ENCODE measurements at regions of chr17 and their contacts with region 1.

Region 1: DNA sequence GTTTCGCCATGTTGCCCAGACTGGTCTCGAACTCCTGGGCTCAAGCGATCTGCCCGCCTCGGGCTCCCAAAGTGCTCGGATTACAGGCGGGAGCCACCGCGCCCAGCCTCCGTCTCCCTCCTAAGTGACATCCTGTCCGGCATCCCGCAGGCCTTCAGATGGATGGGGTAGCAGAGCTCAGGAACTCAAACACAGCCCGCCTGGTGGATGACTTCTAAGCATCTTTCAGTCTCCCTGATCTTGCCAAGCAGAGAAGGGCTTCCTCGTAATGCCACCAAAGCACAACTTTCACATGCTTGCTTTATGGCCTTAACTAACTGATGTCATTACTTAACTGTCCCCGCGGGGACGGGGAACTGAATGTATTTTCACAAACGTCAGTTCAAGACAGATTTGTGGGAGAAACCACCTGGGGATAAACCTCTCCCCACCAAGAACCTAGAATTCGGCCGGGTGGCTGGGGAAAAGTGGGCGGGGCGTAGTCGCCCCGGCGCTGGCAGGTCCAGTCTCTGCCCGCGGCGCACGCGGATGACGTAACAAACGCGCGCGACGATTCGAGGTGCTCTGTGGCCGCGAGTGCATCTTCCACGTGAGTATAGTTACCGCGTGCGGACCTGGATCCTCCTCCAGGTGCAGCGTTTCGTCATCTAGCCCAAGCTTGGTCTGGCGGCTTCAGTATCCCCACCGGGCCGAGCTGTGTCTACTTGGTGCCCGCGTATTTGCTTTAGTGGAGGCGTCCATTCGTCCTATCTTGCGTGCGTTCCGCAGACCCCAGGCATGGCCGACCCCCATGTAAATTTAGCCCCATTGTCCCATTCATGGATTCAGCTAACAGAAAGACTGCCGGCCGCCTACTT is at the start of gene PFAS:
- DNase-seq: peak; percentile 93
- H3K4me3 ChIP-seq: peak within 1 kb of the TSS; percentile 75 to 93
- H3K27ac ChIP-seq: peak within 1 kb of the TSS; percentile 81 to 92
- H3K4me1 ChIP-seq: peaks cover 3 to 5% of the 10 kb centered on the region in 2 experiments; a peak in 3 of 4 replicates
- H3K27me3 ChIP-seq: no peaks in the 10 kb centered on the region
- CTCF ChIP-seq: no peak
- EP300 ChIP-seq: no peak; a peak in 1 of 4 replicates
- RAD21 ChIP-seq: no peak
- polyA plus RNA-seq, gene PFAS: 22.4 and 24.0 TPM in 2 replicates

Region 2: DNA sequence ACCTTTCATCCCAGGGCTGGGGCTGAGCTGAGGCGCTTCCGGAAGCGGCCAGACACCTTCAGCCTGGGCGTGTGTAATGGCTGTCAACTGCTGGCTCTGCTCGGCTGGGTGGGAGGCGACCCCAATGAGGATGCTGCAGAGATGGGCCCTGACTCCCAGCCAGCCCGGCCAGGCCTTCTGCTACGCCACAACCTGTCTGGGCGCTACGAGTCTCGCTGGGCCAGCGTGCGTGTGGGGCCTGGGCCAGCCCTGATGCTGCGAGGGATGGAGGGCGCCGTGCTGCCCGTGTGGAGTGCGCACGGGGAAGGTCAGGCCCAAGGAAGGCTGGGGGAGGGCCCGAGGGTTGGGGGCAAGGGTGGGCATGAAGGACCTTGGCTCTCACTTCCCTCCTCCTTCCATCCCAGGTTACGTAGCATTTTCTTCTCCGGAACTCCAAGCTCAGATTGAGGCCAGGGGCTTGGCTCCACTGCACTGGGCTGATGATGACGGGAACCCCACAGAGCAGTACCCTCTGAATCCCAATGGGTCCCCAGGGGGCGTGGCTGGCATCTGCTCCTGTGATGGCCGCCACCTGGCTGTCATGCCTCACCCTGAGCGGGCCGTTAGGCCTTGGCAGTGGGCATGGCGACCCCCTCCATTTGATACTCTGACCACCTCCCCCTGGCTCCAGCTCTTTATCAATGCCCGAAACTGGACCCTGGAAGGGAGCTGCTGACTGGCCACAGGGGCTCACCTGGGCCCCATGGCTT is 19.7 kb after region 1 on chr17:
- CTCF ChIA-PET with region 1: no interaction called
- POLR2A ChIA-PET with region 1: no interaction called
- DNase-seq: no peak
- H3K4me3 ChIP-seq: no peak overlapping the region
- H3K27ac ChIP-seq: no peak overlapping the region
- H3K4me1 ChIP-seq: no peaks in the 10 kb centered on the region
- H3K27me3 ChIP-seq: no peaks in the 10 kb centered on the region
- CTCF ChIP-seq: no peak
- EP300 ChIP-seq: no peak
- RAD21 ChIP-seq: no peak

Region 3: DNA sequence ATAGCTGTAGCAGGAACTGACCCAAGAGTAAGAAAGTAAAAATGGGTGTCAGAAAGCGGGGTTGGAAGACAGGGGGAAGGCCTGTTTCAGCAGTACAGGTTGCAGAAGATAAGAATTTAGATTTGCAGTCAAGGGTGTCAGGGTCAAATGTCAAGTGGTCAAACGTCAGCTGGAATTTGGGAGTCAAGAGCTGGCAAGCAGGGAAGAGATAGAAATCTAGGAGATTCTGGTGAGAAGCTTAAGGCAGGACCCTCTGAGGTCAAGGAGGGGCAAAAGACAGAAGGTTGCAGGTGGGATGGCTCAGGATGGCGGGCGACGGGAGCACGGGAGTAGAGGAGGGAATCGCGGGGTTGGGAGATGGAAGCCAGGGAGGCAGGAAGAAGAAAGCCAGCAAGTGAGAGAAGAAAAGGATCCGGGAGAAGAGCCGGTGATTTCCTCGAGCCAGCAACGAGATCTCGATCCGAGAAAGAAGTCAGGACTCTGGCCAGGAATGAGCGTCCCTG is 45.9 kb after region 1 on chr17:
- CTCF ChIA-PET with region 1: interaction called, 18 read pairs
- POLR2A ChIA-PET with region 1: interaction called, 11 read pairs
- DNase-seq: no peak
- H3K4me3 ChIP-seq: peak overlapping the region; percentile 61 to 82
- H3K27ac ChIP-seq: peak overlapping the region; percentile 86 to 90
- H3K4me1 ChIP-seq: peaks cover 0 to 16% of the 10 kb centered on the region in 2 experiments; a peak in 1 of 4 replicates
- H3K27me3 ChIP-seq: no peaks in the 10 kb centered on the region
- CTCF ChIP-seq: no peak
- EP300 ChIP-seq: no peak
- RAD21 ChIP-seq: no peak

Region 4: DNA sequence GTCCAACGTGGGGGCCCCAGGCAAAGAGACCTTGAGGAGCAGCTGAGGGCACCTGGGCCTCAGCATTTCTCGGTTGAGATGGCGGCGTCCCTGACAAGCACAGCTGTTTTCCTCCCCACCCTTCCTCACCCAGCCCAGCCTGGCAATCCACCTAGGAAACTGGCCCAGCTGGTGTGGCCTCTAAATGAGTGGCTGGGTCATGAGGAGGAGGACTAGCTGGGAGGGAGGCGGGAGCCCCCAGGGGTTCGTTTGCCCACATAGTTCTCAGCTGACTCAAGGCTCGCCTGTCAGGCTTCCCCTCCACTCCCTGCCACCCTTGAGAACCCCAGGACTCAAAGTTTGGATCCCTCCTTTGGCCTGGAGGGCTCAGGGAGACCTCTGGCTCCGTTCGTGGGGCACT is 142.7 kb after region 1 on chr17:
- CTCF ChIA-PET with region 1: no interaction called
- POLR2A ChIA-PET with region 1: no interaction called
- DNase-seq: no peak
- H3K4me3 ChIP-seq: no peak overlapping the region
- H3K27ac ChIP-seq: no peak overlapping the region
- H3K4me1 ChIP-seq: no peaks in the 10 kb centered on the region; a peak in 1 of 4 replicates
- H3K27me3 ChIP-seq: peaks cover 12% of the 10 kb centered on the region; the same call in 1 of the 2 replicates
- CTCF ChIP-seq: no peak
- EP300 ChIP-seq: no peak
- RAD21 ChIP-seq: no peak